GM10248 (cell line): ENCODE measurements at regions of chr11 and their contacts with region 1.

Region 1: DNA sequence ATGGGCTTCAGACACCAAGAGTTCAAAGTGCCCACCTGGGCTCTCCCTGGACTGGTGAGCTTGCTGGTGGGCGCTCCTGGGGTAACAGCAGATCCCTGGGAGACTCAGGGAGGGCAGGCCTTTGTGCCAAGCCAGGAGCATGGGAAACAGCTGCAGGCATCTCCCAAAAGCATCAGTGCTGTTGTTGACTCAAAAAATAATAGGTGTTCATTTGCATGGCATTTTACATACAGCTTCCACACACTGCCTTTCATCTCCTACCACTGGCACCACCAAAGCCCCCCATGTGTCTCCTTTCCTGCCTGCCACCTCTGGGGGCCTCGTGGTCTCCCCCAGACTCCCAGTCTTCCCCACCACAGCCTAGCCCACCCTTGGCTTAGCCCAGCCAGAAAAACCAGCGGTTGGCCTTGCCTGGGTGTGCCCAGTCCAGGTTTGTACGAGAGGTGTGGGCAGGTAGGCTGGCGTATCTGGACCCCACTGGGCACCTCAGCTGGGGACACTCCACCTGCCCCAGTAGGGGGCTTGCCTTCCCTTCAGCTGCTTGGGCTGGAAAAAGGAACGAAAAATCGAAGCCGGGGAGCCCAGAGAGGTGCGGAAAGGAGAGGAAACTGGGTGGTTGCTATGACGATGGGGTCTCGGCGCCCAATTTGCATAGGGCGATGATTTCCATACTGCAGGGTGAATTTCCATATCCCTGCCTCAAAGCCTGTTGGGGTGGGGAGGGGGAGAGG is 15.0 kb downstream of the POU2F3 start:
- DNase-seq: peak; percentile 68
- CTCF ChIP-seq: no peak

Region 2: DNA sequence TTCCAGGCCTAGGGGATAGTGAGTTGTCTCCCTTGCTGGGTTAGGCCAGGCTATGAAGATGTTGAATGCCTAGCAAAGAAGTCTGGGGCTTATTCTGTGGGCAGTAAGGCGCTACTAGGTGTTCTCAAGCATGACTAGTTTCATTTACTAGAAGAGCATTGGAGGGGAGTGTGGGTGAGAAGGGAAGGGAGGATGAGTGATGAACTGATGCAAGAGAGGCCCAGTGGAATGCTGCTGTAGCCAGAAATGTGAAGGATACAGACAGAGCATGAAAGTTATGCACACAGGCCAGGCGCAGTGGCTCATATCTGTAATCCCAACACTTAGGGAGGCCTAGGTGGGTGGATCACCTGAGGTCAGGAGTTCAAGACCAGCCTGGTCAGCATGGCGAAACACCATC is 18.5 kb after region 1 on chr11:
- CTCF ChIA-PET with region 1: interaction called, 13 read pairs
- POLR2A ChIA-PET with region 1: no interaction called
- DNase-seq: no peak
- CTCF ChIP-seq: no peak